Dendritic cell treated with granulocyte-macrophage colony-stimulating factor and Interleukin-4, amounts not matched to agents 40 ng/mL and 50 ng/mL, for 4 days (primary cell): ENCODE measurements at regions of chr19 and their contacts with region 1.

Region 1: GRCh38 chr19:52823676-52824075 is 2.2 kb upstream of the ZNF28 start:
- H3K4me3 Mint-ChIP-seq: no peak overlapping the region
- H3K27ac Mint-ChIP-seq: no peak overlapping the region
- H3K4me1 Mint-ChIP-seq: peaks cover 10% of the 10 kb centered on the region
- H3K27me3 Mint-ChIP-seq: no peaks in the 10 kb centered on the region

Region 2: GRCh38 chr19:52853880-52854279 is 30.2 kb after region 1 on chr19:
- intact Hi-C with region 1: loop called (anchors 2 kb)
- H3K4me3 Mint-ChIP-seq: no peak overlapping the region
- H3K27ac Mint-ChIP-seq: no peak overlapping the region
- H3K4me1 Mint-ChIP-seq: peaks cover 27% of the 10 kb centered on the region
- H3K27me3 Mint-ChIP-seq: no peaks in the 10 kb centered on the region

Region 3: DNA sequence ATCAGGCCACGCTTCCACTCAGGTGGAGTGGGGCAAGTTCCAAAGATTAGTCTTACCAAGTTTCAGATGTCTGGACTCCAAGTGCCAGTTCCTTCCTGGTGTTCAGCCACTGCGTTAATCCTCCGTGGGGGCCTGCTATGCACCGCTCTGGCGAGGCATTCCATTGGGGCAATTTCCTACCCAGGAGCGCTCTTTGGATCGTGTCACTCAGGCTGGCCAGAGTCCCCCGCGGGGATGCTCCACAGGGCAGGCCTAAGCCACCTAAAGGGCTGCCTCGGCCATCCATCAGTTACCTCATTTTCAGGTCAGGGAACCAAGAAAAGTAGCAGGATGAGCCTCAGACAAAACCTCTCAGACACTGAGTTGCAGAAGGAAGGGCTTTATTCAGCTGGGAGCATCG is 80.4 kb after region 1 on chr19:
- intact Hi-C with region 1: no loop called
- H3K4me3 Mint-ChIP-seq: no peak overlapping the region
- H3K27ac Mint-ChIP-seq: no peak overlapping the region
- H3K4me1 Mint-ChIP-seq: no peaks in the 10 kb centered on the region
- H3K27me3 Mint-ChIP-seq: no peaks in the 10 kb centered on the region